Activated CD4-positive, alpha-beta T cell treated with anti-CD3 and anti-CD28 coated beads for 36 hours (primary cell): ENCODE measurements at regions of chr5 and their contacts with region 1.

Region 1: GRCh38 chr5:177431317-177432142 is 5.1 kb downstream of the GRK6 start:
- DNase-seq: peak; percentile 81
- ATAC-seq: peak; percentile 19
- H3K4me3 Mint-ChIP-seq: peak overlapping the region; percentile 88
- H3K27ac Mint-ChIP-seq: peak overlapping the region; percentile 94
- H3K4me1 Mint-ChIP-seq: peaks cover 73% of the 10 kb centered on the region
- H3K27me3 Mint-ChIP-seq: no peaks in the 10 kb centered on the region

Region 2: DNA sequence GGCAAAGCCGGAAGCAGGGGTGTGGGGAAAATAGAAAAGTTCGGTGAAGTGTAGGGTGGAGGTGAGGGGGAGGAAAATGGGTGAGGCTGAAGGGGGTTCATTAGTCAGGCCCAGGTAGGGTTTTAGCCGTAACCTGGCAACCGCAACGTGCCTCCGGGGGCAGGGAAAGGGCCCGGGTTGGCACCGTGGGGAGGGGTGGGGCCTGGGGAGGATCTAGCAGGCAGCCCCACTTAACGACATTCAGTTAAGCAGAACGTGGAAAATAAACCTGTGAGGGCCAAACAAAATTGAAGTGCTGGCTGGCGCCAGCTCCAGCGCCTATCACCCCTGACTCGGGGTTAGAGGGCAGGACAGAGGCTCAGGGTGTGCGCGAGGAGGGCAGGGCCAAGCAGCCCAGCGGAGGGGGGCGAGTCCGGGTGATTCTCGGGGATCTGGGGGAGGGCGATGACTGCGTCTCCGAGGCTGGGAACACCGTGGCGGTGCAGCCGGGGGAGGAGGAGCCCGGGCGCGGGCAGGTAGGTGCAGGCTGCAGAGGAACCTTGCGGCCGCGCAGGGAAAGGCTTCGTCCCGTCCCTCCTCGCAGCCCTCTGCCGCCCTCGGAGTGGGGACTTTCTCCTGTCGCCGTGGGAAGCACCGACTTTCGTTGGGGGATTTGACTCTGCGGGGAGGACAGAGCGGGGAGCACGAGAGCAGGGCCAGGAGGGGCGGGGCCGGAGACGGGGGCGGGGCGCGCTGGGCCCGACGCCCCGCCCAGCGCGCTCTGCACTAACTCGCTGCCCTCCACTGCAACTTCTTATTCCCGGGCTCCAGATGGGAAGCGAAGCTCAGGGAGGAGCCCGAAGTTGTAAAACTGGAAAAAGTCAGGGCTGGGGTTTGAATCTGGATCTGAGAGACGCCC is 68.7 kb before region 1 on chr5:
- CTCF ChIA-PET with region 1: interaction called, 4 read pairs
- POLR2A ChIA-PET with region 1: no interaction called
- intact Hi-C with region 1: loop called (anchors 2 kb)
- DNase-seq: peak; percentile 84
- ATAC-seq: peak; percentile 68
- H3K4me3 Mint-ChIP-seq: peak overlapping the region; percentile 67
- H3K27ac Mint-ChIP-seq: peak overlapping the region; percentile 82
- H3K4me1 Mint-ChIP-seq: peaks cover 74% of the 10 kb centered on the region
- H3K27me3 Mint-ChIP-seq: no peaks in the 10 kb centered on the region

Region 3: GRCh38 chr5:177446200-177447065 is 14.9 kb after region 1 on chr5 and contains the start of gene PRR7:
- CTCF ChIA-PET with region 1: interaction called, 131 read pairs
- POLR2A ChIA-PET with region 1: interaction called, 85 read pairs
- intact Hi-C with region 1: loop called (anchors 1 to 2 kb)
- DNase-seq: peak; percentile 83
- ATAC-seq: peak; percentile 54
- H3K4me3 Mint-ChIP-seq: peak within 1 kb of the TSS; percentile 51
- H3K27ac Mint-ChIP-seq: peak within 1 kb of the TSS; percentile 89
- H3K4me1 Mint-ChIP-seq: peaks cover 43% of the 10 kb centered on the region
- H3K27me3 Mint-ChIP-seq: no peaks in the 10 kb centered on the region
- total RNA-seq, gene PRR7: 12.3 to 13.0 TPM